ENCODE measurements at regions of chr1 and their contacts with region 1.

Region 1: DNA sequence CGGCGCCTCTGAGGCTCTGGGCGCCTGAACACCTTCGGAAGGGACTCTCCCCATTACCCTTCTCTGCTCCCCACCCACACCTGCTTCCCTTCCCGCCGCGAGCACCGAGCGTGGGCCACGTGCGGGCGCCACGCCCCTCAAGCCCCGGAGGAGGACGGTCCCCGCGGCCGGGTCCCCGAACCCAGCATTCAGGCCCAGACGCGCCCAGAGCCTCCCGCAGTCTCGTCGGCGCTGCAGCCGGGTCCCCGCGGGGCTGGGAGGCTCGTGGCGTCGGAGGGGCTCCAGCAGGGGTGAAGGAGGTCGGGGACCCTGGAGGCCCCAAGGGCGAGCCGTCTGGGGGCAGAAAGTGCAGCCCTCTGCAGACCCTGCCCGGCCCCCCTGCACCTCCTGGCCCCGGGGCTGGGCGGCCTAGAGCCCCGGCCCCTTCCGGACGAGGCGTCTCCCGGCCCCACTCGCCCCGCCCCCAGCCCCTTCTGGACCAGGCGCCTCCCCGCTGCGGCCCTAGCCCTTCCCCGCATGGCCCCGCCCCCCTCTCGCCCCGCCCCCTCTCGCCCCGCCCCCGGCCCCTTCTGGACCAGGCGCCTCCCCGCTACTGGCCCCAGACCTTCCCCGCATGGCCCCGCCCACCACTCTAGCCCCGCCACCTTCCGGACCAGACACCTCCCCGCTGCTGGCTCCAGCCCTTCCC is 378 bp upstream of the SMIM1 start:
- DNase-seq: peak; percentile 82 to 92 (median 83)
- H3K4me3 ChIP-seq: peak overlapping the region; percentile 14 to 60
- H3K4me3 Mint-ChIP-seq: peak overlapping the region; percentile 56 to 81 (median 68)
- H3K27ac ChIP-seq: no peak overlapping the region
- H3K27ac Mint-ChIP-seq: peak overlapping the region in 2 of 7 donors; percentile 25 to 72
- H3K4me1 ChIP-seq: peaks cover 28% of the 10 kb centered on the region
- H3K4me1 Mint-ChIP-seq: peaks cover 4 to 28% (median 11%) of the 10 kb centered on the region in 4 donors
- H3K27me3 ChIP-seq: no peaks in the 10 kb centered on the region
- H3K27me3 Mint-ChIP-seq: peaks cover 0 to 6% of the 10 kb centered on the region in 2 donors

Region 2: DNA sequence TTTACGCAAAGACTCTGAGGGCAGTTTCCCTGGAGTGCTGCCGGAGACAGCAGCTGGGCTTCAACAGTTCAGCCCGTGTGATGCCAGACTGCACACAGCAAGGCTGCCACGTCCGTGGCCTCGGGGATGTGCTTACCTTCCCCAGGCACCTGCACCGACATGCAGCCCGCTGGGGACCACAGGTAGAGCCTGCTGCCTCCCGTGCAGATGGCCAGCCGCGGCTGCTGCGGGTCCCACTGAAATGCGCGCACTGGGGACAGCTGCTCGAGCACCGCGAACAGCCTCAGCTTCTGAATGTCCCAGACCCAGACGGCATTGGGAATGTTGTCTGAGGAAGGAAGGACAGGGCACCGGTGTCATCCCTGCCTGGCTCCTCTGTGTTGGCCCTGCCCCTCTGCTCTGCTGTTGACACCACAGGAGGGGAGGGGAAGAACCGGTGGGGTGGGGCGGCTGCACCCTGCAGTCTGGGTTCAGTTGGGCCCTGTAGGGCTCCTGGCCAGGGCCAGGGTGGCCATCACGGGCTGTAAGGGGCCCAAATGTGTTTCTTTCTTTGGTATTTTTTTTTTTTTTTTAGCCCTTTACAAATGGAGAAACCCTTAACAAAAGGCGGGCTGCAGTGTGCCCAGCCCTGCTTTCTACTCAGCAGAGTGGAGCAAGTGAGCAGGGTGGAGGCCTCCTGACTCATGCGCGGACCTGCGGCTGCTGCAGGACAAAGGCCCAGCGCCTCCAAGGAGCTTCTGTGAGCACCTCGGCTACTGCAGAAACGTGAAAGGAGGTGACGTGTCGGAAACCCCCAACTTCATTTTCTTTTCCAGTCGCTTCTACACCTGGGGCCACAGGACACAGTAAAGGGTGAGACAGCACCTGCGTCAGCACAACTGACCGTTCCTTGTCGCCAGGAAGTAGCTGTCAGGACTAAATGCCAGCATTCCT is 140.6 kb before region 1 on chr1:
- CTCF ChIA-PET with region 1: no interaction called
- POLR2A ChIA-PET with region 1: no interaction called
- intact Hi-C with region 1: no loop called
- DNase-seq: no peak
- H3K4me3 ChIP-seq: no peak overlapping the region
- H3K4me3 Mint-ChIP-seq: no peak overlapping the region
- H3K27ac ChIP-seq: no peak overlapping the region
- H3K27ac Mint-ChIP-seq: no peak overlapping the region
- H3K4me1 ChIP-seq: no peaks in the 10 kb centered on the region
- H3K4me1 Mint-ChIP-seq: peaks cover 0 to 1% (median 0%) of the 10 kb centered on the region in 4 donors
- H3K27me3 ChIP-seq: no peaks in the 10 kb centered on the region
- H3K27me3 Mint-ChIP-seq: no peaks in the 10 kb centered on the region

Region 3: GRCh38 chr1:3746830-3747521 is 25.2 kb before region 1 on chr1:
- CTCF ChIA-PET with region 1: no interaction called
- POLR2A ChIA-PET with region 1: interaction called, 3 read pairs
- intact Hi-C with region 1: loop called (anchors 1 kb)
- DNase-seq: peak; percentile 81 to 89 (median 83)
- H3K4me3 ChIP-seq: peak overlapping the region in 1 of 2 donors; percentile 57
- H3K4me3 Mint-ChIP-seq: peak overlapping the region; percentile 78 to 86 (median 80)
- H3K27ac ChIP-seq: peak overlapping the region; percentile 36
- H3K27ac Mint-ChIP-seq: peak overlapping the region in 6 of 7 donors; percentile 52 to 87 (median 78)
- H3K4me1 ChIP-seq: peaks cover 17% of the 10 kb centered on the region
- H3K4me1 Mint-ChIP-seq: peaks cover 21 to 41% (median 32%) of the 10 kb centered on the region in 4 donors
- H3K27me3 ChIP-seq: no peaks in the 10 kb centered on the region
- H3K27me3 Mint-ChIP-seq: no peaks in the 10 kb centered on the region

Region 4: GRCh38 chr1:3869751-3870301 is 97.7 kb after region 1 on chr1:
- CTCF ChIA-PET with region 1: no interaction called
- POLR2A ChIA-PET with region 1: no interaction called
- intact Hi-C with region 1: no loop called
- DNase-seq: no peak
- H3K4me3 ChIP-seq: no peak overlapping the region
- H3K4me3 Mint-ChIP-seq: no peak overlapping the region
- H3K27ac ChIP-seq: no peak overlapping the region
- H3K27ac Mint-ChIP-seq: no peak overlapping the region
- H3K4me1 ChIP-seq: no peaks in the 10 kb centered on the region
- H3K4me1 Mint-ChIP-seq: peaks cover 2 to 4% (median 3%) of the 10 kb centered on the region in 4 donors
- H3K27me3 ChIP-seq: no peaks in the 10 kb centered on the region
- H3K27me3 Mint-ChIP-seq: no peaks in the 10 kb centered on the region

Region 5: GRCh38 chr1:3900119-3900968 is 128.2 kb after region 1 on chr1 and contains the start of gene C1orf174:
- CTCF ChIA-PET with region 1: no interaction called
- POLR2A ChIA-PET with region 1: interaction called, 7 read pairs
- intact Hi-C with region 1: loop called (anchors 1 kb)
- DNase-seq: peak; percentile 96 to 99 (median 98)
- H3K4me3 ChIP-seq: peak within 1 kb of the TSS; percentile 54 to 84
- H3K4me3 Mint-ChIP-seq: peak within 1 kb of the TSS; percentile 86 to 98 (median 94)
- H3K27ac ChIP-seq: peak within 1 kb of the TSS; percentile 81
- H3K27ac Mint-ChIP-seq: peak within 1 kb of the TSS; percentile 93 to 99 (median 96)
- H3K4me1 ChIP-seq: peaks cover 52% of the 10 kb centered on the region
- H3K4me1 Mint-ChIP-seq: peaks cover 30 to 71% (median 42%) of the 10 kb centered on the region in 4 donors
- H3K27me3 ChIP-seq: no peaks in the 10 kb centered on the region
- H3K27me3 Mint-ChIP-seq: no peaks in the 10 kb centered on the region
- total RNA-seq, gene C1orf174: 34.6 to 36.0 TPM

Measured in CD4-positive, alpha-beta memory T cell (primary cell).